GM12878 (cell line): ENCODE measurements at regions of chr17 and their contacts with region 1.

Region 1: DNA sequence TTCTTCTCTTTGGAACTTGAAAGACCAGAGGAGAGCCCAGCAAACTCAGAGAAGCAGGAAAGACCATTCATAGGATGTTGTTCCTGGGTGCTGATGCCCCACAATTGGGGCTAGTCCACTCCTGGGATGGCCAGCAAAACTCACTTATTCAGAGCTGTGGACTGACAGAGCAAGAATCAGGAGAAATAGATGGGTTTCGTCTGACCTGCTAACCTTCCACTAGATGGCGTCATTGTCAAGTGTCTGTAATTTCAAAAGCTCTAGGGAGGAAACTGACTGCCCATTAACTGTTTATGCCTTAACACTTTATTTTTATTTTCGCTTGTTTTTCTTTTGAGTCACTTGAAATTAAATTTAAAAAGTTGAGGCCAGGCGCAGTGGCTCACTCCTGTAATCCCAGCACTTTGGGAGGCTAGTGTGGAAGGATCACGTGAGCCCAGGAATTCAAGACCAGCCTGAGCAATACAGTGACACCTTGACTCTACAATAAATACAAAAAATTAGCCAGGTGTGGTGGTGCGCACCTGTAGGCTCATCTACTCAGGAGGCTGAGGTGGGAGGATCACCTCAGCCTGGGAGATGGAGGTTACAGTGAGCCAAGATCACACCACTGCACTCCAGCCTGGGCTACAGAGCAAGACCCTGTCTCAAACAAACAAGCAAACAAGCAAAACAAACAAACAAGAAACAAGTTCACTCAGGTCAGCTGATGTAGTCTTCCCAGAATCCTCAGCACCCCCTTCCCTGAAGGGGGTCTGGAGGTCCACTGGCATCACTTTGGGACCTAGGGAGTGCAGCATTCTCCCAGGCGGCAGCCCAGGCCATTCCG is 28.6 kb upstream of the MILR1 start:
- DNase-seq: no peak
- ATAC-seq: peak; percentile 91
- H3K4me3 ChIP-seq: no peak overlapping the region
- H3K27ac ChIP-seq: no peak overlapping the region
- H3K4me1 ChIP-seq: no peaks in the 10 kb centered on the region
- H3K27me3 ChIP-seq: no peaks in the 10 kb centered on the region
- CTCF ChIP-seq: peak; percentile 66 to 72 (median 69)
- EP300 ChIP-seq: no peak
- POLR2A ChIP-seq: no peak
- RAD21 ChIP-seq: peak; percentile 91

Region 2: GRCh38 chr17:64300699-64300965 is 119.7 kb before region 1 on chr17:
- CTCF ChIA-PET with region 1: interaction called, 627 read pairs
- POLR2A ChIA-PET with region 1: interaction called, 6 read pairs
- RAD21 ChIA-PET with region 1: interaction called, 17 read pairs
- SMC1A ChIA-PET with region 1: interaction called, 83 read pairs
- in situ Hi-C with region 1: no loop called
- intact Hi-C with region 1: no loop called
- DNase-seq: no peak
- ATAC-seq: no peak
- H3K4me3 ChIP-seq: no peak overlapping the region
- H3K27ac ChIP-seq: no peak overlapping the region
- H3K4me1 ChIP-seq: no peaks in the 10 kb centered on the region
- H3K27me3 ChIP-seq: peaks cover 0 to 3% of the 10 kb centered on the region in 2 experiments; a peak in 1 of 4 replicates
- CTCF ChIP-seq: no peak
- EP300 ChIP-seq: no peak
- POLR2A ChIP-seq: no peak
- RAD21 ChIP-seq: no peak

Region 3: DNA sequence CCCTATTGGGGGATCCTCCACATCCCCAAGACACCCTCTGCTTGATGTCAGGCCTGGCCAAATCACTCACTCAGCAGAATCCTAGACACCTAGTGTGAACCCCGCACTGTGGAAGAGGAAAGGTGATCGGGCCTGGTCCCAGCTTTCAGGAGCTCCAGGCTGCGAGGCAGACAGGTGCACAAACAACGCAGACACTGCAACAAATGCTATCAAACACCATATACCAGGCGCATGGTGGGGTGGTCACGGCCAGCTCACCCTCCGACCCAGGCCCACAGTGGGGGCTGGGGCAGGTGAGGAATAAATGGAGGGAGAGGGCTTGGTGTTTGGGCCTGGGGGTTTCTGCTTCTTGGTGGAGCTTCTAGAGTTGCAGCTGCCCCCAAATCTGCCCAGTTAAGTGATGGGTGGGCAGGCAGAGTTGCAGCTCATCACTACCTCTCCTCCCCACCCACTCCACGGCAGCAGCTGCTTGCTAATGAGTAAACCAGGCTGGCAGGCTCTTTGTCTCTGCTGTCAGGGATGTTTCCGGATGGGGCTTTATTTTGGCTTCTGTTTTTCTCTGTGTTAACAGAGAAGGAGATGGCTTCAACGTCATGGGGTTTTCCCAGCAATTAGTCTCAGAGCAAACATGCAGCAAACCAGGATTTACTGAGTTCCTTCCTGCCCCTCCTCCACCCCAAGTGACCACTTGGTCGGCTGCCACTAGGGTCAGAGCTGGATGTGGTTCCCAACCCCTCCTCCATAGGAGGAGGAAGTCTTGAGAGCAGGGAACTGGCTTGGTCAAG is 76.3 kb before region 1 on chr17:
- CTCF ChIA-PET with region 1: interaction called, 11 read pairs
- POLR2A ChIA-PET with region 1: no interaction called
- RAD21 ChIA-PET with region 1: interaction called, 7 read pairs
- SMC1A ChIA-PET with region 1: interaction called, 3 read pairs
- in situ Hi-C with region 1: no loop called
- intact Hi-C with region 1: no loop called
- DNase-seq: no peak
- ATAC-seq: peak; percentile 94
- H3K4me3 ChIP-seq: no peak overlapping the region
- H3K27ac ChIP-seq: no peak overlapping the region
- H3K4me1 ChIP-seq: no peaks in the 10 kb centered on the region
- H3K27me3 ChIP-seq: no peaks in the 10 kb centered on the region
- CTCF ChIP-seq: no peak
- EP300 ChIP-seq: peak in 1 of 2 experiments; percentile 34; a peak in 2 of 4 replicates
- POLR2A ChIP-seq: no peak
- RAD21 ChIP-seq: no peak

Region 4: GRCh38 chr17:64406321-64407200 is 13.8 kb before region 1 on chr17:
- CTCF ChIA-PET with region 1: interaction called, 33 read pairs
- POLR2A ChIA-PET with region 1: no interaction called
- RAD21 ChIA-PET with region 1: interaction called, 15 read pairs
- SMC1A ChIA-PET with region 1: interaction called, 29 read pairs
- in situ Hi-C with region 1: no loop called
- intact Hi-C with region 1: no loop called
- DNase-seq: no peak
- ATAC-seq: no peak
- H3K4me3 ChIP-seq: no peak overlapping the region
- H3K27ac ChIP-seq: no peak overlapping the region
- H3K4me1 ChIP-seq: peaks cover 39% of the 10 kb centered on the region
- H3K27me3 ChIP-seq: no peaks in the 10 kb centered on the region
- CTCF ChIP-seq: no peak
- EP300 ChIP-seq: no peak
- POLR2A ChIP-seq: no peak
- RAD21 ChIP-seq: no peak

Region 5: GRCh38 chr17:64491034-64491859 is 70.9 kb after region 1 on chr17:
- CTCF ChIA-PET with region 1: interaction called, 350 read pairs
- POLR2A ChIA-PET with region 1: interaction called, 3 read pairs
- RAD21 ChIA-PET with region 1: interaction called, 174 read pairs
- SMC1A ChIA-PET with region 1: interaction called, 121 read pairs
- in situ Hi-C with region 1: loop called (anchors 5 kb)
- intact Hi-C with region 1: loop called (anchors 1 kb)
- DNase-seq: no peak
- ATAC-seq: peak; percentile 85
- H3K4me3 ChIP-seq: no peak overlapping the region
- H3K27ac ChIP-seq: no peak overlapping the region
- H3K4me1 ChIP-seq: no peaks in the 10 kb centered on the region; the same call in 1 of the 2 replicates
- H3K27me3 ChIP-seq: no peaks in the 10 kb centered on the region
- CTCF ChIP-seq: peak; percentile 44 to 69 (median 68)
- EP300 ChIP-seq: no peak
- POLR2A ChIP-seq: no peak
- RAD21 ChIP-seq: peak; percentile 66

Region 6: GRCh38 chr17:64547319-64547718 is 127.0 kb after region 1 on chr17:
- CTCF ChIA-PET with region 1: interaction called, 6 read pairs
- POLR2A ChIA-PET with region 1: no interaction called
- RAD21 ChIA-PET with region 1: interaction called, 6 read pairs
- SMC1A ChIA-PET with region 1: interaction called, 10 read pairs
- in situ Hi-C with region 1: no loop called
- intact Hi-C with region 1: no loop called
- DNase-seq: no peak
- ATAC-seq: no peak
- H3K4me3 ChIP-seq: no peak overlapping the region
- H3K27ac ChIP-seq: no peak overlapping the region
- H3K4me1 ChIP-seq: no peaks in the 10 kb centered on the region
- H3K27me3 ChIP-seq: no peaks in the 10 kb centered on the region
- CTCF ChIP-seq: no peak
- EP300 ChIP-seq: no peak
- POLR2A ChIP-seq: no peak
- RAD21 ChIP-seq: no peak

Region 7: DNA sequence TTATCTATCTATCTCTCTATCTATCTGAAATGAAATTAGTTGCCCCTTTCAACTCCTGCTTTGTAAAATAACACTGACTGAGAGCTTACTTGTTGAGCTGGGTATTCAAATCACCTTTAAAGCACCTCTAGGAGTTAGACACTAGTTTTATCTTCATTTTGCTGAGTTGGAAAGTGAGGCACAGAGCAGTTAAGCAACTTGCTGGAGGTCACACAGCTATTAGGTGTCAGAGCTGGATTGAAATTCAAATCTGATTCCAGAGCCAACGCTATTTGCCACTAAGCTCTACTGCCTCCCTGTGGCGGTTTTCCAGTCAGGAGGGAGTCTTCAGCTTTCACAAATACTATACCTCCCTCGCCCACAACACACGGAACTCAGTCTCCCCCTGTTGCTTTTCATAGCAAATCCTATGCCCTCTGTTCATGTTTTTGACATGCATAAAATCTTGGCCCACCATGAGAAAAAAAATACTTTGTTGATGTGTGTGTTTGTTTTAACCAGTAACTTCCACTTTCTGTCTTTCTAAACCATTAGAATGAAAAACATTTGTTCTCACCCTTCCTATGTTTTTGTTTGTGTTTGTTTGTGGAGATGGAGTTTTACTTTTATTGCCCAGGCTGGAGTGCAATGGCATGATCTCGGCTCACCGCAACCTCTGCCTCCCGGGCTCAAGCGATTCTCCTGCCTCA is 316.6 kb after region 1 on chr17:
- CTCF ChIA-PET with region 1: interaction called, 51 read pairs
- POLR2A ChIA-PET with region 1: no interaction called
- RAD21 ChIA-PET with region 1: interaction called, 12 read pairs
- SMC1A ChIA-PET with region 1: interaction called, 18 read pairs
- in situ Hi-C with region 1: no loop called
- intact Hi-C with region 1: no loop called
- DNase-seq: no peak
- ATAC-seq: peak; percentile 76
- H3K4me3 ChIP-seq: no peak overlapping the region
- H3K27ac ChIP-seq: no peak overlapping the region
- H3K4me1 ChIP-seq: no peaks in the 10 kb centered on the region
- H3K27me3 ChIP-seq: no peaks in the 10 kb centered on the region; a peak in 1 of 4 replicates
- CTCF ChIP-seq: peak; percentile 30 to 49 (median 41); a peak in 4 of 6 replicates
- EP300 ChIP-seq: no peak
- POLR2A ChIP-seq: no peak
- RAD21 ChIP-seq: peak; percentile 33; the same call in 1 of the 2 replicates